ENCODE measurements at regions of chr10 and their contacts with region 1.

Region 1: GRCh38 chr10:70363971-70364771 is 18.3 kb downstream of the LRRC20 start:
- DNase-seq: peak; percentile 88
- ATAC-seq: peak; percentile 95
- H3K4me3 ChIP-seq: peak overlapping the region in 1 of 3 experiments; percentile 13; a peak in 2 of 6 replicates
- H3K27ac ChIP-seq: peak overlapping the region; percentile 52
- H3K4me1 ChIP-seq: peaks cover 42% of the 10 kb centered on the region
- H3K27me3 ChIP-seq: no peaks in the 10 kb centered on the region
- CTCF ChIP-seq: peak; percentile 99
- EP300 ChIP-seq: peak in 1 of 2 experiments; percentile 77; a peak in 1 of 4 replicates
- POLR2A ChIP-seq: no peak
- RAD21 ChIP-seq: peak; percentile 100

Region 2: GRCh38 chr10:70221030-70221429 is 143.1 kb before region 1 on chr10:
- CTCF ChIA-PET with region 1: interaction called, 35 read pairs
- POLR2A ChIA-PET with region 1: interaction called, 19 read pairs
- in situ Hi-C with region 1: loop called (anchors 5 kb)
- intact Hi-C with region 1: loop called (anchors 1 kb)
- DNase-seq: no peak
- ATAC-seq: no peak
- H3K4me3 ChIP-seq: no peak overlapping the region
- H3K27ac ChIP-seq: peak overlapping the region; percentile 15
- H3K4me1 ChIP-seq: peaks cover 25% of the 10 kb centered on the region
- H3K27me3 ChIP-seq: no peaks in the 10 kb centered on the region; a peak in 1 of 5 replicates
- CTCF ChIP-seq: no peak
- EP300 ChIP-seq: no peak
- POLR2A ChIP-seq: no peak
- RAD21 ChIP-seq: no peak

Region 3: GRCh38 chr10:70233109-70233938 is 130.8 kb before region 1 on chr10 and contains the start of gene PPA1:
- CTCF ChIA-PET with region 1: no interaction called
- POLR2A ChIA-PET with region 1: interaction called, 10 read pairs
- in situ Hi-C with region 1: no loop called
- intact Hi-C with region 1: no loop called
- DNase-seq: peak; percentile 92
- ATAC-seq: peak; percentile 89
- H3K4me3 ChIP-seq: peak within 1 kb of the TSS; percentile 82 to 93 (median 86)
- H3K27ac ChIP-seq: peak within 1 kb of the TSS; percentile 92
- H3K4me1 ChIP-seq: peaks cover 68% of the 10 kb centered on the region
- H3K27me3 ChIP-seq: no peaks in the 10 kb centered on the region; a peak in 1 of 5 replicates
- CTCF ChIP-seq: peak; percentile 38; the same call in 1 of the 2 replicates
- EP300 ChIP-seq: peak in 1 of 2 experiments; percentile 42; a peak in 1 of 4 replicates
- POLR2A ChIP-seq: peak; percentile 89 to 97
- RAD21 ChIP-seq: peak; percentile 40; the same call in 1 of the 2 replicates
- total RNA-seq, gene PPA1: 250 and 371 TPM in 2 replicates

Region 4: DNA sequence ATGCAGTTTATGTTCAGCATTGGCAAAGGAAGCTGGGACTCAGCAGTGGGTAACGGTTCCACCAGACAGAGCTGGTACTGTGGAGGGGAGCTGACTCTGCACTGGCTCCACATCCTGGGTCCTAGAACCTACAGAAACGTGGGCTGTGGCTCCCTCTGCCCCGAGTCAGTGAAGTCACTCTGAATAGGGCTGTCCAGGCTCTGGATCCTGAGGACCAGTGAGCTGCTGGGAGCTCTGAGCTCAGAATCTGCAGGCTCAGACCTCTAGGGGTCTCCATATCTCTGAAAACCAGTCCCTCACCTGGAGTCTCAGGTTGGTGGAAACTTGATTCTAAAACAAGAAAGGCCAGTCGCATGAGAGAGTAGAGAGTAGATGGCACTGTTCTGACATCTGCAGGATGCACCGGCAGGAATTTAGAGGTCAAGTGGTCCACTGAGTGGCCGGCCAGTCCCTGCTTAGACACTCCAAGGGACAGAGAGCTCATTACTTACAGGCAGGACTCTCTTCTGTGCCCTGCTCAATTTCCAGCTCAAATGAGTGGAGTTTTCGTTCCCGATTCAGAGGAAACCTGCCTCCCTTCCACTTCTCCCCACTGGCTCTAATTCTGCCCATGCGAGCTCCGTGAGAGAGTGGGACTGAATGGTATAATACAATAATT is 99.0 kb before region 1 on chr10:
- CTCF ChIA-PET with region 1: interaction called, 8 read pairs
- POLR2A ChIA-PET with region 1: interaction called, 5 read pairs
- in situ Hi-C with region 1: loop called (anchors 5 kb)
- intact Hi-C with region 1: loop called (anchors 1 kb)
- DNase-seq: peak; percentile 61
- ATAC-seq: peak; percentile 98
- H3K4me3 ChIP-seq: no peak overlapping the region
- H3K27ac ChIP-seq: no peak overlapping the region
- H3K4me1 ChIP-seq: no peaks in the 10 kb centered on the region
- H3K27me3 ChIP-seq: peaks cover 2 to 3% of the 10 kb centered on the region in 2 experiments; a peak in 2 of 5 replicates
- CTCF ChIP-seq: peak; percentile 81
- EP300 ChIP-seq: no peak
- POLR2A ChIP-seq: no peak
- RAD21 ChIP-seq: peak; percentile 26; the same call in 1 of the 2 replicates

Region 5: GRCh38 chr10:70283445-70284399 is 80.4 kb before region 1 on chr10 and contains the start of gene NPFFR1:
- CTCF ChIA-PET with region 1: no interaction called
- POLR2A ChIA-PET with region 1: no interaction called
- in situ Hi-C with region 1: no loop called
- intact Hi-C with region 1: loop called (anchors 5 kb)
- DNase-seq: no peak
- ATAC-seq: peak; percentile 82
- H3K4me3 ChIP-seq: peak within 1 kb of the TSS; percentile 42 to 69 (median 44); a peak in 4 of 6 replicates
- H3K27ac ChIP-seq: no peak within 1 kb of the TSS
- H3K4me1 ChIP-seq: peaks cover 6% of the 10 kb centered on the region; the same call in 1 of the 2 replicates
- H3K27me3 ChIP-seq: peaks cover 7 to 47% of the 10 kb centered on the region in 2 experiments; a peak in 4 of 5 replicates
- CTCF ChIP-seq: peak; percentile 70
- EP300 ChIP-seq: no peak
- POLR2A ChIP-seq: no peak
- RAD21 ChIP-seq: peak; percentile 32
- total RNA-seq, gene NPFFR1: under 0.01 TPM in 1 of 2 replicates, not detected in the other

Region 6: DNA sequence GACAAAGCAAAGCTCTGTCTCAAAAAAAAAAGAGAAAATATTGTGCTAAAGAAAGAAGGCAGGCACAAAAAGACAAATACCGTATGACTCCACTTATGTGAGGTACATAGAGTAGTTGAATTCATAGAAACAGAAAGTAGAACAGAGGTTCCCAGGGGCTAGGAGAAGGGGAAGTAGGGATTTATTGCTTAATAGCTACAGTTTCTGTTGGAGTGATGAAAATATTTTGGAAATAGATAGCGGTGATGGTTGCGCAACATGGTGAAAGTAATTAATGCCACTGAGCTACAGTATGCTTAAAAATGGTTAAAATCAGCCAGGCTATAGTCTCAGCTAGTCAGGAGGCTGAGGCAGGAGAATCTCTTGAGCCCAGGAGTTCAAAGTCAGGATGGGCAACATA is 61.9 kb before region 1 on chr10:
- CTCF ChIA-PET with region 1: no interaction called
- POLR2A ChIA-PET with region 1: no interaction called
- in situ Hi-C with region 1: no loop called
- intact Hi-C with region 1: no loop called
- DNase-seq: no peak
- ATAC-seq: no peak
- H3K4me3 ChIP-seq: no peak overlapping the region
- H3K27ac ChIP-seq: no peak overlapping the region
- H3K4me1 ChIP-seq: no peaks in the 10 kb centered on the region
- H3K27me3 ChIP-seq: no peaks in the 10 kb centered on the region; a peak in 1 of 5 replicates
- CTCF ChIP-seq: no peak
- EP300 ChIP-seq: no peak
- POLR2A ChIP-seq: no peak
- RAD21 ChIP-seq: no peak

Region 7: DNA sequence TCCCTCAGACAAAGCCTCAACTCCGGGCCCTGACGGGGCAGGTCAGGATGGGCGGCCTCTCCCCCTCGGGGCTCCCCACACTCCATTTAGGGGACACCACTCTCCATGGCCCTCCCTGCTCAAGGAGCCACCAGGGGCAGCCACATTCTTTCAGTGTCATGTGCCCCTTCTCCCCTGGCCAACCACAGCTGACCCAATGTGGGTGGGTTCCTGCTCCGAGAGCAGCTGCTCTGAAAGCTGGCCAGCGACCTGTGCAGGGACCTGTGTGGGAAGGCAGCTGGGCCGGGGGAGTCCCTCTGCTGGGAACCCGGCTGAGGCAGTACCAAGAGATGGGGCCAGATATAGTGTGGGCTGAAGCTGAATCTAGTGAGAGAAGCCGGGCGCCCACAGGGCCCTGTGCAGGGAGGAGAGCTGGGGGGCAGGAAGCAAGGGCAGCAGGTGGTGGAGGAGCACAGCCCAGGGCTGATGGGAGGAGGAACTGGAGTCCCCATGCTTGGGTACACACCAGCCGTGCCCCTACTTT is 39.8 kb before region 1 on chr10:
- CTCF ChIA-PET with region 1: interaction called, 20 read pairs
- POLR2A ChIA-PET with region 1: interaction called, 32 read pairs
- in situ Hi-C with region 1: no loop called
- intact Hi-C with region 1: loop called (anchors 1 kb)
- DNase-seq: peak; percentile 46
- ATAC-seq: peak; percentile 72
- H3K4me3 ChIP-seq: peak overlapping the region; percentile 70 to 92 (median 71)
- H3K27ac ChIP-seq: peak overlapping the region; percentile 77
- H3K4me1 ChIP-seq: peaks cover 62% of the 10 kb centered on the region
- H3K27me3 ChIP-seq: no peaks in the 10 kb centered on the region; a peak in 1 of 5 replicates
- CTCF ChIP-seq: no peak
- EP300 ChIP-seq: no peak
- POLR2A ChIP-seq: no peak; a peak in 1 of 4 replicates
- RAD21 ChIP-seq: no peak

Region 8: DNA sequence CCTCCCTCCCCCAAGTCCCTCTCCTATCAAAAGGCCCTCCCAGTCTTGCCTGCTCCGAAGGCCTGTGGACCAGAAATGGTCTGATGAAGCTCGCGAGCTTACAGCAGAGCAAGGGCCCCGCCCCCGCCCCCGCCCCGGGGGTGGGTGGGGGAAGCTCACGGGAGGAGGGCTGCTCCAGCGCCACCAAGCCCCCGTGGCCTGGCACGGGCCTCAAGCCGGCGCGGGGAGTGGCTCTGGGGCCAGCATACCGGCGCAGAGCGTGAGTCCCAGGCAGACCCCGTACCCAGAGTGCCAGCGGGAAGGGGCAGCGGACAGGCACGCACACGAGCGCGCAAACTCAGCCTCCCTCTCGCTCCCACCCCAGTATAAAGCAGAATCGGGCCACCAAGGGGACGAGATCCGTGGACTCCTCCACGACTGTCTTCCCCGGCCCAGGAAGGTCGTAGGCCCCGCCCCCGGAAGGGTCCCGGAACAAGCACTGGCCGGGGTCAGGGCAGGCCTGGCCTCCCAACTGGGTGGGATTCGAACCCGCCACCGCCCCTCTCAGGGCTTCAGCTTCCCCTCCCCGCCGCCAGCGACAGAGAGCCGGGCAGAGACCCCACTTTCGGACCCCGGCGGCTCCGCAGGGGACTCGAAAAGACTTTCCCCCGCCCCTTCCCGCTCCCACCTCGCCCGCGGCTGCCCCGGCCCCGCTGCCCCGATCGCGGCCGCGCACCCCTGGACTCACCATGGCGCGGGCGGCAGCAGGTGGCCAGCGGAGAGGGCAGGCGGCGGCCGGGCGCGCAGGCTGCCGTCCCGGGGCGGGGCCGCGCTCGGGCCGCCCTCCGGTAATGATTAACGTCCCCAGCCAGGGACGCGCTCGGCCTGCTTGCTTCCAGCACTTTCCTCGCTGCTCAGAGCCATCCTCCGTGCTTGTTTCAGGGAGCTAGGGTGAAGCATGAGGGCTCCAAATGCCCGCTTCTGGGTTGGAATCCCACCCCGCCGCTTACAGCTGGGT is 523.9 kb after region 1 on chr10 and contains the start of gene PCBD1:
- CTCF ChIA-PET with region 1: no interaction called
- POLR2A ChIA-PET with region 1: no interaction called
- in situ Hi-C with region 1: no loop called
- intact Hi-C with region 1: no loop called
- DNase-seq: peak; percentile 74
- ATAC-seq: peak; percentile 90
- H3K4me3 ChIP-seq: peak within 1 kb of the TSS; percentile 69 to 87 (median 79)
- H3K27ac ChIP-seq: peak within 1 kb of the TSS; percentile 91
- H3K4me1 ChIP-seq: peaks cover 58% of the 10 kb centered on the region
- H3K27me3 ChIP-seq: no peaks in the 10 kb centered on the region; a peak in 1 of 5 replicates
- CTCF ChIP-seq: peak; percentile 20; the same call in 1 of the 2 replicates
- EP300 ChIP-seq: no peak
- POLR2A ChIP-seq: peak; percentile 38 to 79
- RAD21 ChIP-seq: no peak; the same call in 1 of the 2 replicates
- total RNA-seq, gene PCBD1: 168 and 177 TPM in 2 replicates